Activated CD4-positive, alpha-beta memory T cell treated with anti-CD3 and anti-CD28 coated beads for 36 hours (primary cell): ENCODE measurements at regions of chr9 and their contacts with region 1.

Region 1: DNA sequence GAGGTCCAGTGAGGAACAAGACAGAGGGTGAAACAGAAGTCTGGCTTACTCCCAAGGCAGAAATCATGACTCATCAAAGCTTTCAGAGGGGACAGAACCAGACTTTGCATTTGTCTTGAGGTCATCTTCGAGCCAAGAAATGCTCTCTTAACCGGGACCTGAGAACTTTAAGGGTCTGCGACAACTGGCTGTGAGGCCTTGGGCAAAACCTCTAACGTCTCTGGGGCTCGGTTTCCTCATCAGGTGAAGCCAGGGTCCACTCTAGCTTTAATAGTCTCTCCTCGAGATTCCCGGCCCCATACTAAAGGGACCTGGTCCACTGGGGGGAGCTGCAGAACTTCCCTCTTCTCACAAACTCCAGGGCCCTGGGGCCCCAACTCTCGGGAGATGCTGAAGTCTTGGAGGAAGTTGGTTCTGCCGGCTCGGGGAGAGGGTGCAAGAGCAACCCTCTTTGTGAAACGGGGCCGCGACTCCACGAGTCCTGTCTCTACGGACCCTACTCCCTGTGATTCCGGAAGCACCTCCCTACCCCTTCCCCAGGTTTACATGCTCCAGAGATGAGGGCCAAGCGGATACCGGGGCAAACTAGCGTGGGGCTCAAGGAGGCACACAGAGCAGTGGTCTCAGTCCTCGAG is 2.6 kb downstream of the GLIS3 start:
- DNase-seq: peak; percentile 66
- H3K4me3 Mint-ChIP-seq: peak overlapping the region; percentile 89
- H3K27ac Mint-ChIP-seq: peak overlapping the region; percentile 59
- H3K4me1 Mint-ChIP-seq: peaks cover 27% of the 10 kb centered on the region
- H3K27me3 Mint-ChIP-seq: peaks cover 37% of the 10 kb centered on the region

Region 2: GRCh38 chr9:2849941-2850340 is 1447.3 kb before region 1 on chr9:
- CTCF ChIA-PET with region 1: no interaction called
- POLR2A ChIA-PET with region 1: no interaction called
- intact Hi-C with region 1: loop called (anchors 10 kb)
- DNase-seq: peak; percentile 18
- H3K4me3 Mint-ChIP-seq: no peak overlapping the region
- H3K27ac Mint-ChIP-seq: no peak overlapping the region
- H3K4me1 Mint-ChIP-seq: peaks cover 10% of the 10 kb centered on the region
- H3K27me3 Mint-ChIP-seq: no peaks in the 10 kb centered on the region

Region 3: DNA sequence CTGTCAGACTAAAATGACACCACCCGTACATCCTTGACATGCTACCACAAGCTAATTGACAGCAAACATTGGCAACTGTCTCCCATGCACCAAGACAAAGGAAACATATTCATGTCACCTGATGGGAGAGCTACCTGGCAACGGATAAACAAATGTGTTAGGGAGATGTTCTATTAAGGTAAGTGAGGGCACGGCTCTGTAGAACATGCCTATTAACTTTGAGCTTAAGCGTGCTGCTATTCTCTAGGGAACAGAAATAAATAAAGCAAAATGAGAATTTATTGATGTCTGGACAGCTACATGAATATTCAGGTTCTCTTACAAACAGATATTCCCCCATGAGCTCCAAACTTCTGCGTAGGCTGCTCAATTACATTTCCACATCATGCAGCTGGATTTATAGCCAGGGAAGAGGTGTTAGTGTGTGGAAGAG is 410.0 kb before region 1 on chr9:
- CTCF ChIA-PET with region 1: no interaction called
- POLR2A ChIA-PET with region 1: no interaction called
- intact Hi-C with region 1: no loop called
- DNase-seq: no peak
- H3K4me3 Mint-ChIP-seq: no peak overlapping the region
- H3K27ac Mint-ChIP-seq: no peak overlapping the region
- H3K4me1 Mint-ChIP-seq: peaks cover 9% of the 10 kb centered on the region
- H3K27me3 Mint-ChIP-seq: no peaks in the 10 kb centered on the region

Region 4: GRCh38 chr9:4167083-4167671 is 130.1 kb before region 1 on chr9:
- CTCF ChIA-PET with region 1: no interaction called
- POLR2A ChIA-PET with region 1: no interaction called
- intact Hi-C with region 1: no loop called
- DNase-seq: no peak
- H3K4me3 Mint-ChIP-seq: no peak overlapping the region
- H3K27ac Mint-ChIP-seq: no peak overlapping the region
- H3K4me1 Mint-ChIP-seq: no peaks in the 10 kb centered on the region
- H3K27me3 Mint-ChIP-seq: peaks cover 4% of the 10 kb centered on the region

Region 5: DNA sequence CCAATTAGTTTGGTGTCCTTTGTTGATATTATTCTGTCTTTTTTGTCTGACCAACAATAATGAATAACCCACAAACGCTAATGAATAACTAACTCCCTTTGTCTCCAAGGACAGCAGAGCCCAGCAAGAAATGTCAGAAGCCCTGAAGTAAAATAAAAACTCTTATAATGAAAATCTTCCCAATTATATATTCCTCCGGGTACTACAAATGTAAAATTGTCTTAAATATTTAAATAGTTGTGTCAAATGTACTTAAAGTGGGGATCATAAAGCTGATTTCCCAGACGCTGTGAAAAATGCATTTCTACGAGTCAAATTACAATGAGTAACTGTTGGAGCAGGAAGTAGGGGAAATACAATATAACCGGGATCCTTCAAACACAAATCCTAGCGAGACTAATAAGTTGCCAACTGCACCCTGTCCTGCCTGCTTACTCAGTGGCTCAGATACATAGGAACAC is 19.7 kb before region 1 on chr9:
- CTCF ChIA-PET with region 1: no interaction called
- POLR2A ChIA-PET with region 1: no interaction called
- intact Hi-C with region 1: no loop called
- DNase-seq: no peak
- H3K4me3 Mint-ChIP-seq: no peak overlapping the region
- H3K27ac Mint-ChIP-seq: no peak overlapping the region
- H3K4me1 Mint-ChIP-seq: no peaks in the 10 kb centered on the region
- H3K27me3 Mint-ChIP-seq: peaks cover 8% of the 10 kb centered on the region